A673 (cell line): ENCODE measurements at regions of chr6 and their contacts with region 1.

Region 1: GRCh38 chr6:3403238-3404173 is 53.3 kb downstream of the SLC22A23 start:
- DNase-seq: no peak
- H3K4me3 ChIP-seq: no peak overlapping the region
- H3K27ac ChIP-seq: no peak overlapping the region
- H3K4me1 ChIP-seq: no peaks in the 10 kb centered on the region
- H3K27me3 ChIP-seq: no peaks in the 10 kb centered on the region
- CTCF ChIP-seq: no peak

Region 2: DNA sequence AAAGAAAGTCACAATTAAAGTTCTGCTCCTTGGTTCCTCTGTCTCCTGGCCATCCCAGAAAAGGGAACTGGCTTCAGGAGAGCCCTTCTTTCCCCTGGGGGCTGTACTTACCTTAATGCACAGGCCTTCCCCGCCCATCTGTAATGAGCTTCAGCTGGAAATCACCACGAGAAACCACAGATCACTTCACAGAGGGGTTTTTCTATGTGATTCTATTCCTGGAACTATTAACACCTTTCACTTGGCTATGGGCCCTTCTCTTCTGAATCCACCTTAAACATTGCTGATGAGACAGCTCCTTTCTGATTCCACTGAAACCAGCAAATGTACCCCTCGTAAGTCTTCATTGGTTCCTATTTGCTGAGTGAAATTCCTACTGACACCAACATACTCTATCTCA is 1933.5 kb before region 1 on chr6:
- CTCF ChIA-PET with region 1: no interaction called
- POLR2A ChIA-PET with region 1: no interaction called
- intact Hi-C with region 1: loop called (anchors 5 kb)
- DNase-seq: no peak
- H3K4me3 ChIP-seq: no peak overlapping the region
- H3K27ac ChIP-seq: no peak overlapping the region
- H3K4me1 ChIP-seq: no peaks in the 10 kb centered on the region
- H3K27me3 ChIP-seq: no peaks in the 10 kb centered on the region
- CTCF ChIP-seq: no peak

Region 3: DNA sequence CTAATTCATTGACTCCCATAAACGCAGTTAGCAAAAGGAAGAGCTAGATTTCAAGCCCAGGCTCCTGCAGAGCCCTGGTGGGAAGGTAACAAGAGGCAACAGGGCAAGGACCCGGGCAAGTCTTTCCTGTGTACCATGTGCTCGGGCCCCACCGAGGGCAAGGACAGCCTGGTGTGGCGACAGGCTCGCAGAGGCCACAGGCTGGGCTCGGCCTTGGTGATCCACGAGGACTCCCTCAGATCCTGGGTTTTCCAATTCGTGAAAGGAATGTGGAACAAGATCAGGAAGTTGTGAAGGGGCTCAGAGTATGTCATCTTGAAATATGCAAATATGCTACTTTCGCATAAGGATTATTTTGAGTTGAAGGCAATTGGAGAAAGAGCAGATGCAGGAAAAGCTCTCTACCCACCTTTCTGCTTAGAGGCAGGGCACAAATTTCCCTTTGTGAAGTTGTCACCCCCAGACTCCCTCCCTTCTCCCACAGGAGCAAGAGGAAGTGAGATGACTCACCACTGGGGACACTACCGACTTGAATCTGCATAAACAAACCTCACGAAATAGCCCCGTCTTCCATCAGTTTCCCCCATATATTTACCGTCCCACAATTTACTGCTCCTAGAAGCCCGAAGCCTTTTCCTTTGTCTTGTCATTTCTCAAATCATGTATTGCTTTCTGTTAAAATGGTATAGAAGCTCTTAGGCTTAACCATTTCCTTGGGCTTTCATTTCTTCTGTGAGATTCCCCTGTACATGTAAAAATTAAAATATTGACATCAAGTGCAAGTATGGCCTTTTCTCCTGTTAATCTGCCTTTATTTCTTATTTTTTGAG is 65.8 kb before region 1 on chr6:
- CTCF ChIA-PET with region 1: no interaction called
- POLR2A ChIA-PET with region 1: no interaction called
- intact Hi-C with region 1: no loop called
- DNase-seq: peak; percentile 80
- H3K4me3 ChIP-seq: no peak overlapping the region
- H3K27ac ChIP-seq: peak overlapping the region; percentile 79
- H3K4me1 ChIP-seq: peaks cover 54% of the 10 kb centered on the region
- H3K27me3 ChIP-seq: no peaks in the 10 kb centered on the region
- CTCF ChIP-seq: 0 out of 2 replicates have a peak, but pooled peaks have one; percentile 18